Natural killer cell (primary cell): ENCODE measurements at regions of chr19 and their contacts with region 1.

Region 1: DNA sequence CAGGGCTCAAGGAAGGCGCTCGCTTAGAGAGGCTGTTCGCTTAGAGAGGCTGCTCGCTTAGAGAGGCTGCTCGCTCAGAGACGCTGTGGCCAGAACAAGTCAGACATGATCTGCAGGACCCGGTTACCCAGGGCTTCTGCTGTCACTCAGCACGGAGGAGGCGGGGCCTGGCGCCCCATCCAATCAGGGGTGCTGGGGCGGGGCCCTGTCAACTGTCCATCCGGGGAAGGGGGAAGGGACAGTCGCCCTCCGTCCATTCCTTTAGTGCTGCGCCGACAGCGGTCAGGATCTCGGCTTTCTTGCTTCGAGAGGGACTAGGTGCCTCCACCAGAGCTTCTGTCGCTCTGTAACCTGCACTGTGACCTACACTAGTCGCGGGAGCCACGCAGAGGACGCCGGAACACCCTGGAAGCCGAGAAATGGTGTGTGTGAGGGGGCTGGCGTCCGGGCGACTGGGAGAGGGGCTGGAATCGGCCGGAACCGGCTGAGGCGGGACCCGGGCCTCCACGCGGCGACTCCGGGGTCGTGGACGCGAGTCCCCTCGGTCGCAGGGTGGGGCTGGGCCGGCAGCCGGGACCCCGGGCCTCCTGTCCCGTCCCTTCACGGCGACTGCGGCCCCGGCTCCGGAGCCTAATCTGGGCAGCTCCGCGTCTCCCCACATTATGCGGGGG is at the start of gene ZNF440:
- DNase-seq: peak; percentile 84 to 92
- ATAC-seq: peak; percentile 99 to 100 (median 99)
- H3K4me3 ChIP-seq: peak within 1 kb of the TSS; percentile 83
- H3K4me3 Mint-ChIP-seq: peak within 1 kb of the TSS; percentile 95
- H3K27ac ChIP-seq: peak within 1 kb of the TSS; percentile 55
- H3K27ac Mint-ChIP-seq: peak within 1 kb of the TSS; percentile 77 to 91
- H3K4me1 ChIP-seq: peaks cover 17% of the 10 kb centered on the region
- H3K4me1 Mint-ChIP-seq: peaks cover 25 to 32% of the 10 kb centered on the region in 2 donors
- H3K27me3 ChIP-seq: no peaks in the 10 kb centered on the region
- H3K27me3 Mint-ChIP-seq: no peaks in the 10 kb centered on the region
- CTCF ChIP-seq: no peak
- total RNA-seq, gene ZNF440: 21.8 to 37.4 (median 26.6) TPM

Region 2: DNA sequence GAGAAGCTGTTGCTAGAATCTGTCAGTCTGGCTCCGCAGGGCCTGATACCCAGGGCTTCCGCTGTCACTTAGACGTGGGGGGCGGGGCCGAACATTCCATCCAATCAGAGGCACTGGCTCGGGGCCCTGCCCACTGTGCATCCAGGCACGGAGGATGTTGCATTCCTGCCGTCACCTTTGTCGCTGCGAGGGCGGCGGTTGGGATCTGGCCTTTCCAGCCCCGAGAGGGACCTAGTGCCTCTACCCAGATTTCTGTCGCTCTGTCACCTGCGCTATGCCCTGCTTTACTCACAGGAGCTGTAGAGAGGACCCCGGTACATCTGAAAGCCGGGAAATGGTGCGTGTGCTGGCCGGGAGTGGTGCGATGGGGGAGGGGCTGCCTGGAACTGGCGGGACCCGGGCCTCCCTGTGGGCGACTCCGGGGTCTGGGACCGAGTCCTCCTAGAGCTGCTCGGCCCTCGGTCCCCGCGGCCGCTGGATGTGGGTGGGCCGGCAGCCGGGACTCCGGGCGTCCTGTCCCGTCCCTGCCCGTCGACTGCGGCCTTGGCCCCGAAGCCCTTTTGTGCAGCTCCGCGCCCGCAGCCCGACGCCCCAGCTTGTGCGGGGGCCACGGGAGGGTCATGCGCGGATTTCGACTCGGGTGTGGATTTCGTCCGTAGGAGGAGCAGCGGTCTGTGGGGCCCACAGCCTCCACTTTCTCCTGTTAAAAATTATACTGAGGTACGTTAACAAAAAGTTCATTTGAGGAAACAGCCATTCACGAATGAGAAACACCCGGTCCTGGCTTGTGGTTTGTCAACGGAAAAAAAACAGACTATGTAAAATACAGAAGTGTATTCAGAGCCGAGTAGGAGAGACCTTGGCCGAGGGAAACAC is 34.7 kb after region 1 on chr19 and contains the start of gene ZNF439:
- intact Hi-C with region 1: loop called (anchors 5 kb)
- DNase-seq: peak; percentile 90 to 91
- ATAC-seq: peak; percentile 99 to 100 (median 99)
- H3K4me3 ChIP-seq: peak within 1 kb of the TSS; percentile 65
- H3K4me3 Mint-ChIP-seq: peak within 1 kb of the TSS; percentile 90
- H3K27ac ChIP-seq: peak within 1 kb of the TSS; percentile 57
- H3K27ac Mint-ChIP-seq: peak within 1 kb of the TSS; percentile 74 to 91
- H3K4me1 ChIP-seq: peaks cover 10% of the 10 kb centered on the region
- H3K4me1 Mint-ChIP-seq: peaks cover 24 to 28% of the 10 kb centered on the region in 2 donors
- H3K27me3 ChIP-seq: no peaks in the 10 kb centered on the region
- H3K27me3 Mint-ChIP-seq: no peaks in the 10 kb centered on the region
- CTCF ChIP-seq: no peak
- total RNA-seq, gene ZNF439: 9.6 to 18.4 (median 15.4) TPM